Naive thymus-derived CD4-positive, alpha-beta T cell (primary cell): ENCODE measurements at regions of chr2 and their contacts with region 1.

Region 1: GRCh38 chr2:191051825-191052778 is 38.1 kb upstream of the STAT1 start:
- DNase-seq: peak in 7 of 9 donors; percentile 28 to 66 (median 62)
- ATAC-seq: peak; percentile 84
- H3K4me3 ChIP-seq: no peak overlapping the region
- H3K4me3 Mint-ChIP-seq: no peak overlapping the region
- H3K27ac ChIP-seq: peak overlapping the region; percentile 29
- H3K27ac Mint-ChIP-seq: peak overlapping the region in 1 of 9 donors; percentile 80
- H3K4me1 ChIP-seq: peaks cover 26 to 30% of the 10 kb centered on the region in 2 donors
- H3K4me1 Mint-ChIP-seq: peaks cover 8 to 29% (median 22%) of the 10 kb centered on the region in 7 donors
- H3K27me3 ChIP-seq: no peaks in the 10 kb centered on the region
- H3K27me3 Mint-ChIP-seq: no peaks in the 10 kb centered on the region

Region 2: GRCh38 chr2:189783927-189784867 is 1267.9 kb before region 1 on chr2 and contains the starts of genes ORMDL1 and PMS1:
- CTCF ChIA-PET with region 1: no interaction called
- POLR2A ChIA-PET with region 1: no interaction called
- intact Hi-C with region 1: no loop called
- DNase-seq: peak; percentile 90 to 96 (median 94)
- ATAC-seq: peak; percentile 95
- H3K4me3 ChIP-seq: peak within 1 kb of the TSS; percentile 76
- H3K4me3 Mint-ChIP-seq: peak within 1 kb of the TSS; percentile 86 to 97 (median 94)
- H3K27ac ChIP-seq: peak within 1 kb of the TSS; percentile 92
- H3K27ac Mint-ChIP-seq: peak within 1 kb of the TSS; percentile 89 to 97 (median 95)
- H3K4me1 ChIP-seq: peaks cover 21 to 24% of the 10 kb centered on the region in 2 donors
- H3K4me1 Mint-ChIP-seq: peaks cover 26 to 72% (median 57%) of the 10 kb centered on the region in 7 donors
- H3K27me3 ChIP-seq: no peaks in the 10 kb centered on the region
- H3K27me3 Mint-ChIP-seq: no peaks in the 10 kb centered on the region
- total RNA-seq, gene ORMDL1: 80.1 to 208 (median 142) TPM
- total RNA-seq, gene PMS1: 18.2 to 30.1 (median 22.5) TPM

Region 3: DNA sequence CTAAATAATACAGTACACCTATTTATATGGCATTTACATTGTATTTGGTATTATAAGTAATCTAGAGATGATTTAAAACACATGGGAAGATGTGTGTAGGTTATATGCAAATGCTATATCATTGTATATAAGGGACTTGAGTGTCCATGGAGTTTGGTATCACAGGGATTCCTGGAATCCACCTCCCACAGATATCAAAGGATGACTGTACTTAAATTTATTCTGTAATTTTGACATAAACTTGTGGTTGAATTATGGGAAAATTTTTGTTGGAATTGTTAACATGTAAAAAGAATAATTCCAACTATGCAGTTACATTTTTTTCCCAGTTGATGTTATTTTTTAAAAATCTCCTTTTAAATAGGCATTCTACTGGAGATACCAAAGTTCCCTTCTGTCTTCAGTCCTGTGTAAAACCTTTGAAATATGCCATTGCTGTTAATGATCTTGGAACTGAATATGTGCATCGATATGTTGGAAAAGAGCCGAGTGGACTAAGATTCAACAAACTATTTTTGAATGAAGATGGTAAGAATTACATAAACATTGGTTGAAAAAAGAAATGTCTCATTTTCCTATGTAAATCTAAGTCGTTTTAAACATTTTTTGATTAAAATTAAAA is 147.4 kb before region 1 on chr2:
- CTCF ChIA-PET with region 1: no interaction called
- POLR2A ChIA-PET with region 1: no interaction called
- intact Hi-C with region 1: no loop called
- DNase-seq: no peak
- ATAC-seq: no peak
- H3K4me3 ChIP-seq: no peak overlapping the region
- H3K4me3 Mint-ChIP-seq: no peak overlapping the region
- H3K27ac ChIP-seq: no peak overlapping the region
- H3K27ac Mint-ChIP-seq: peak overlapping the region in 3 of 9 donors; percentile 59 to 69 (median 61)
- H3K4me1 ChIP-seq: peaks cover 0 to 3% of the 10 kb centered on the region in 2 donors
- H3K4me1 Mint-ChIP-seq: peaks cover 0 to 19% (median 11%) of the 10 kb centered on the region in 7 donors
- H3K27me3 ChIP-seq: no peaks in the 10 kb centered on the region
- H3K27me3 Mint-ChIP-seq: no peaks in the 10 kb centered on the region

Region 4: GRCh38 chr2:191030521-191031154 is 21.5 kb before region 1 on chr2:
- CTCF ChIA-PET with region 1: interaction called, 13 read pairs
- POLR2A ChIA-PET with region 1: interaction called, 3 read pairs
- intact Hi-C with region 1: no loop called
- DNase-seq: peak in 7 of 9 donors; percentile 31 to 64 (median 59)
- ATAC-seq: peak; percentile 86
- H3K4me3 ChIP-seq: no peak overlapping the region
- H3K4me3 Mint-ChIP-seq: peak overlapping the region in 4 of 10 donors; percentile 6 to 41 (median 20)
- H3K27ac ChIP-seq: peak overlapping the region; percentile 52
- H3K27ac Mint-ChIP-seq: peak overlapping the region; percentile 36 to 83 (median 73)
- H3K4me1 ChIP-seq: peaks cover 27 to 30% of the 10 kb centered on the region in 2 donors
- H3K4me1 Mint-ChIP-seq: peaks cover 15 to 66% (median 37%) of the 10 kb centered on the region in 7 donors
- H3K27me3 ChIP-seq: no peaks in the 10 kb centered on the region
- H3K27me3 Mint-ChIP-seq: no peaks in the 10 kb centered on the region

Region 5: DNA sequence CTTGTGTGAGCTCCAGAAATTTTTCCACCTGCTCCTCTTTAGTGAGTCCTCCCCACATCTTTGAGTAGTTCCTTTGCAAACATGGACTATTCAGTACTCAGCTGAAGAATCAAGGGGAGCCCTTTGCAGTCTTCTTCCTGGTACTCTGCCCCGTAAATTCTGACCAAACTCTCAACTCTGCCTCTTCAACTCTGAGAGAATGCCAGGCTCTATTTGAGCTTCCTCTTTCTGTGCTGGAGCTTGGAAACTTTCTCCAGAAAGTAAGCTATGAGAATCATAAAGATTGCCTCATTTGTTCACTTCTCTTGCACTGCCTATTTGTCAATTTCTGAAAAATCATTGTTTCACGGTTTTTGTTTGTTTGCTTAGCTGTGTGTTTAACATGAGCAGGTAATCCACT is 106.1 kb after region 1 on chr2:
- CTCF ChIA-PET with region 1: interaction called, 488 read pairs
- POLR2A ChIA-PET with region 1: interaction called, 92 read pairs
- intact Hi-C with region 1: loop called (anchors 1 kb)
- DNase-seq: no peak
- ATAC-seq: no peak
- H3K4me3 ChIP-seq: no peak overlapping the region
- H3K4me3 Mint-ChIP-seq: no peak overlapping the region
- H3K27ac ChIP-seq: no peak overlapping the region
- H3K27ac Mint-ChIP-seq: peak overlapping the region in 1 of 9 donors; percentile 29
- H3K4me1 ChIP-seq: peaks cover 4 to 13% of the 10 kb centered on the region in 2 donors
- H3K4me1 Mint-ChIP-seq: peaks cover 0 to 36% (median 5%) of the 10 kb centered on the region in 7 donors
- H3K27me3 ChIP-seq: no peaks in the 10 kb centered on the region
- H3K27me3 Mint-ChIP-seq: peaks cover 0 to 7% (median 0%) of the 10 kb centered on the region in 5 donors

Region 6: GRCh38 chr2:191302459-191303139 is 250.5 kb after region 1 on chr2:
- CTCF ChIA-PET with region 1: no interaction called
- POLR2A ChIA-PET with region 1: no interaction called
- intact Hi-C with region 1: loop called (anchors 1 to 10 kb)
- DNase-seq: peak in 6 of 9 donors; percentile 4 to 27 (median 18)
- ATAC-seq: peak; percentile 54
- H3K4me3 ChIP-seq: no peak overlapping the region
- H3K4me3 Mint-ChIP-seq: no peak overlapping the region
- H3K27ac ChIP-seq: no peak overlapping the region
- H3K27ac Mint-ChIP-seq: peak overlapping the region in 1 of 9 donors; percentile 16
- H3K4me1 ChIP-seq: no peaks in the 10 kb centered on the region
- H3K4me1 Mint-ChIP-seq: no peaks in the 10 kb centered on the region
- H3K27me3 ChIP-seq: no peaks in the 10 kb centered on the region
- H3K27me3 Mint-ChIP-seq: no peaks in the 10 kb centered on the region

Region 7: GRCh38 chr2:191369036-191369435 is 316.9 kb after region 1 on chr2:
- CTCF ChIA-PET with region 1: no interaction called
- POLR2A ChIA-PET with region 1: no interaction called
- intact Hi-C with region 1: loop called in 1 of 2 experiments (anchors 1 kb)
- DNase-seq: peak in 1 of 9 donors; percentile 5
- ATAC-seq: no peak
- H3K4me3 ChIP-seq: no peak overlapping the region
- H3K4me3 Mint-ChIP-seq: no peak overlapping the region
- H3K27ac ChIP-seq: no peak overlapping the region
- H3K27ac Mint-ChIP-seq: no peak overlapping the region
- H3K4me1 ChIP-seq: no peaks in the 10 kb centered on the region
- H3K4me1 Mint-ChIP-seq: no peaks in the 10 kb centered on the region
- H3K27me3 ChIP-seq: no peaks in the 10 kb centered on the region
- H3K27me3 Mint-ChIP-seq: peaks cover 0 to 9% (median 5%) of the 10 kb centered on the region in 5 donors

Region 8: GRCh38 chr2:191691016-191691735 is 639.1 kb after region 1 on chr2:
- CTCF ChIA-PET with region 1: no interaction called
- POLR2A ChIA-PET with region 1: no interaction called
- intact Hi-C with region 1: loop called in 1 of 2 experiments (anchors 5 kb)
- DNase-seq: peak in 7 of 9 donors; percentile 44 to 69 (median 61)
- ATAC-seq: peak; percentile 93
- H3K4me3 ChIP-seq: no peak overlapping the region
- H3K4me3 Mint-ChIP-seq: no peak overlapping the region
- H3K27ac ChIP-seq: no peak overlapping the region
- H3K27ac Mint-ChIP-seq: peak overlapping the region in 5 of 9 donors; percentile 31 to 61 (median 44)
- H3K4me1 ChIP-seq: peaks cover 3 to 11% of the 10 kb centered on the region in 2 donors
- H3K4me1 Mint-ChIP-seq: peaks cover 8 to 28% (median 15%) of the 10 kb centered on the region in 7 donors
- H3K27me3 ChIP-seq: no peaks in the 10 kb centered on the region
- H3K27me3 Mint-ChIP-seq: no peaks in the 10 kb centered on the region